ENCODE measurements at regions of chr17 and their contacts with region 1.

Region 1: DNA sequence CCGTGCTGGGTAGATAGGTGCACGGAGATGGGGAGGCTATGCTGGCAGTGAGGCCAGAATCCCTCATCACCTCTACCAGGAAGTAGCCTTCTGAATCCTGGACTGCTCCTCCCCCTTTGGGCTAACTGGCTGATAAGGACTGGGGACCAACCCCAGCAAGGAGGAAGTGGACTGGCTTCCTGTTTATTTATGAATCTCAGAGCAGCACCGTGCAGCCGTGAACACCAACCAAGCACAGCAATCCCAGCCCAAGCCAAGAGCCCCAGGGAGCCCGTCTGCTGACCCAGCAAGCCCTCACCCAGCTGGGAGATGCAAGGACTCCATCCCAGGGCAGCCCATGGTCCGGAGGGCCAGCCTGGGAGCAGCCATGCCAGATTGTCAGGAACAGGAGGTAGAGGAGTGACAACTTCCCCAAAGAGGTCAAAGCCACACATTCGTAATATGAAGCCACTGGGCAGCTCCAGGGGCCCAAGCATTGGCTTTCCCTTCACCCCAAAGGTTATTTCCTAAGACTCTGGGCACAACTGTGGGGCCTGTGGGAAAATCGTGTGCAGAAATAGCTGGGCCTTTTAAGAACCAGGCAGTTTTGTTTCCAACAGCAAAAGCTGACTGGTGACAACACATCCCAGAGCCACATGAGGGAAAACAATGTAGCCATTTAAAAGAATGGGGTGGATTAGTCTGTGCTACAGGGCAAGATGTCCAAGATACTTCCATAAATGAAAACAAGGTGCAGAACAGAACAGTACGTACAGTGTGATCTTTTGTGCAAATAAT is 23.9 kb downstream of the PHB1 start:
- DNase-seq: no peak
- H3K4me3 ChIP-seq: no peak overlapping the region
- H3K27ac ChIP-seq: no peak overlapping the region
- H3K4me1 ChIP-seq: peaks cover 22% of the 10 kb centered on the region
- H3K27me3 ChIP-seq: no peaks in the 10 kb centered on the region
- CTCF ChIP-seq: no peak

Region 2: DNA sequence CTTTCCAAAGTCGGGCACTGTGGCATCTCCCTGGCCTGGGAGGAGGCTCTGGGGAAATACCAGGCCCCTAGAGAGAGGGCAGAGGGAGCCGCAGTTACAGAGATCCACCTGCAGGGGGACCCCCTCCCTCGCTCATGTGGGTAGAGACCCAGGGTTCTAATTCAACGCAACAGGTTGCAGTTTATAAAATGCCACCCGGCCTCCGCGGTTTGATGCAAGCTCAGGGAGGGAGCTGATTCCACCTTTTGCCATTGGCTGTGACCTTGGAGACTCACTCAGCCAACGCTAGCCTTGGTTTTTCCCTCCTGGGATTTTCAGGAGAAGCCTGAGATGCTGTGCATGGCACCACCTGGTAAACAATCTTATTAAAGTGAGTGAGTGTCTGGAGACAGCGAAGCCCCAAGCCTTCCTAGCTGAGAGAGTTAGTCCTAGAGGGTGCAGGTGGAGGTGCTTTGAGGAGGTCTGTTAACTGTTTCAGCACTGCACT is 585.8 kb before region 1 on chr17:
- CTCF ChIA-PET with region 1: no interaction called
- POLR2A ChIA-PET with region 1: no interaction called
- intact Hi-C with region 1: loop called (anchors 10 kb)
- DNase-seq: peak; percentile 87
- H3K4me3 ChIP-seq: peak overlapping the region; percentile 24
- H3K27ac ChIP-seq: peak overlapping the region; percentile 89
- H3K4me1 ChIP-seq: peaks cover 50% of the 10 kb centered on the region
- H3K27me3 ChIP-seq: no peaks in the 10 kb centered on the region
- CTCF ChIP-seq: peak; percentile 96

Region 3: DNA sequence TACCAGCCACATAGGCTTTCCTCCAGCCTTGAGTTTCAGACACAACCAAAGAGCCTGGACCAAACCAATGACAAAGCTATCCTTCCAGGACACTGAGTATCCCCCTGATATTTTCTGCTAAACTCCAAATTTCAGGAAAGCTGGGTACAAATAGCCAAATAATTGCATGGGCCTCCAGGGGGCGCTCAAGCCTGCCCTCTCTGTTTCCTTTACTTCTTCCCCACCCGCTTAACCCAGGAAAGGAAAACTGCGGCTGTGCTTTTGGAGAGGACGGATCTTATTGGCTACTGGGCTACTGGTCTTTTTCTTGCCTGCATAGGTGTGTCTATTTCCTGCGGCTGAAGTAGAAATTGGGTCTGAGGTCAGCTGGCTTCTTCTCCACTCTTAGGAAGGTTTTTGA is 210.4 kb before region 1 on chr17:
- CTCF ChIA-PET with region 1: no interaction called
- POLR2A ChIA-PET with region 1: no interaction called
- intact Hi-C with region 1: loop called (anchors 2 kb)
- DNase-seq: peak; percentile 87
- H3K4me3 ChIP-seq: no peak overlapping the region
- H3K27ac ChIP-seq: no peak overlapping the region
- H3K4me1 ChIP-seq: no peaks in the 10 kb centered on the region
- H3K27me3 ChIP-seq: no peaks in the 10 kb centered on the region
- CTCF ChIP-seq: peak; percentile 94

Region 4: DNA sequence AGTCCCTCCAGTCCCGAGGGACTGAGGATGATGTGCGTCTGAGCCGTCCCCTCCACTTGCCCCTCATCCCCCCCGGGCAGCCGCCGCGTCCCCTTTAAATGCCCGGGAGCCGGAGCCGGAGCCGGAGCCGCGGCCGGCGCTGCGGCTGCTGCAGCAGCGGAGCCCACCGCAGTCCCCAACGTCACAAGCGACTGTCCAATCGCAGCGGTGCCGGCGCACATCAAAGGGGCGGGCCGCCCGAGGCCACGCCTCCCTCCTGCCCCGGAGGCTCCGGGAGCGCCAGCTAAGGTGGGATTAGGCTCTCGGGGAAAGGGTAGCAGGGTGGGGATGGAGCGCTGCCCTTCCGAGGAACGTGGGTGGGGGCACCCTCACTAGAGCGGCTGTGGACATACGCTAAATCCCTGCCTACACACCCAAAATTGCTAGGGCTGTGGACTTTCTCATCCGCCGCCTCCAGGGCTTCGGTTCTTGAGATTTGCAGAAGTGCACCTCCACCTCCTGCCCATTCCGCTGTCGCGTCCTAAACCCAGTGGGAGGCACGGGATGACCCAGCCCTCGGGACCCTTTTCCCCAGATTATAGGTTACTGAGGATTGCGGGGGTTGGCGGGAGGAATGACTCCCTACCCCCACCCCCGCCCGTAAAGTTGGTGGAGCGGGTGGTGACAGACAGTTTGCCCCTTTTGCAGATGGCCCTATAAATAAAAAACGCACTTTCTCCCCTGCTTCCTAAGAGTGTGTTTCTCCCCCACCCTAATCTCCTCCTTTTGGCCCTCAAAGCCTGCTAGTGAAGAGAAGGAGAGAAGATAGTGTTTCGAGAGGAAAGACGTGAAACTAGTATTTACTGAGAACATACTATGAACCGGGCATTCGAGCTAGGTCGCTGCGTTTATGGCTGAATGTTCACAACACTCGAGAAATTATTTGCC is 159.8 kb before region 1 on chr17 and contains the start of gene PHOSPHO1:
- CTCF ChIA-PET with region 1: no interaction called
- POLR2A ChIA-PET with region 1: no interaction called
- intact Hi-C with region 1: loop called (anchors 5 kb)
- DNase-seq: peak; percentile 94
- H3K4me3 ChIP-seq: peak within 1 kb of the TSS; percentile 76
- H3K27ac ChIP-seq: peak within 1 kb of the TSS; percentile 86
- H3K4me1 ChIP-seq: peaks cover 22% of the 10 kb centered on the region
- H3K27me3 ChIP-seq: no peaks in the 10 kb centered on the region
- CTCF ChIP-seq: no peak
- total RNA-seq, gene PHOSPHO1: 88.6 and 98.3 TPM in 2 replicates

Region 5: GRCh38 chr17:49260011-49260921 is 130.5 kb before region 1 on chr17:
- CTCF ChIA-PET with region 1: interaction called, 10 read pairs
- POLR2A ChIA-PET with region 1: no interaction called
- intact Hi-C with region 1: no loop called
- DNase-seq: peak; percentile 78
- H3K4me3 ChIP-seq: peak overlapping the region; percentile 50
- H3K27ac ChIP-seq: peak overlapping the region; percentile 68
- H3K4me1 ChIP-seq: no peaks in the 10 kb centered on the region
- H3K27me3 ChIP-seq: no peaks in the 10 kb centered on the region
- CTCF ChIP-seq: no peak

Region 6: DNA sequence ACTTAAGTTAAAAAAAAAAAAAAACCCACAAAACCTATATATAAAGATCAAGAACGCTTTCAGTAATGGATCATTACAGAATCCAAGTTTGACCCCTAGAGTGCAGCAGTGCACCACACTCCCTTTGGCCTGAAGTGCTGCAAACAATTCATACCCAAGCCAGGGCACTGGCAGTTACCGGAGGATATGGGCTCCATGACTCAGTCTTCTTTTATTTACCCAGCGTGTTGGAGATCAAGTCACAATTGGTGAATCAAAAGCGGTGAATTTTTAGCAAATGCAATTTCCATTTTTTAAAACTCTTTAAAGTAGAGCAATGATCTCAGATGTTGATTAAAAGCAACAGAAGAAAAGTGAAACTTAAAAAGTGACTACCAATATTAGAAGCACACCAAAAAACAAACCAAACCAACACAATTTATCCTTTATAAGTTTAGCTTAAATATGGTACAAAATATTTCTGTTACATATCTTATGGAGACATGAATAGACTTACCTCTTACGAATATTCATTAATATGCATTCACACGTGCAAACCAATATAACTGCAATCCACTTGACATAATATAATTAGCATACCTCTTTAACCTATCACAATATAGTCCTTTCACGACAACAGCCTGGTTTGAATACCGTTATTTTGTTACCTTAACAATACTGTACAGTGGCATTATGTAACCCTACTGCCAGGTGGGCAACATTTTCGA is 75.0 kb before region 1 on chr17:
- CTCF ChIA-PET with region 1: interaction called, 6 read pairs
- POLR2A ChIA-PET with region 1: no interaction called
- intact Hi-C with region 1: loop called (anchors 1 kb)
- DNase-seq: peak; percentile 89
- H3K4me3 ChIP-seq: peak overlapping the region; percentile 3
- H3K27ac ChIP-seq: no peak overlapping the region
- H3K4me1 ChIP-seq: peaks cover 57% of the 10 kb centered on the region
- H3K27me3 ChIP-seq: no peaks in the 10 kb centered on the region
- CTCF ChIP-seq: peak; percentile 85

Measured in A673 (cell line).